ENCODE measurements at regions of chr11 and their contacts with region 1.

Region 1: DNA sequence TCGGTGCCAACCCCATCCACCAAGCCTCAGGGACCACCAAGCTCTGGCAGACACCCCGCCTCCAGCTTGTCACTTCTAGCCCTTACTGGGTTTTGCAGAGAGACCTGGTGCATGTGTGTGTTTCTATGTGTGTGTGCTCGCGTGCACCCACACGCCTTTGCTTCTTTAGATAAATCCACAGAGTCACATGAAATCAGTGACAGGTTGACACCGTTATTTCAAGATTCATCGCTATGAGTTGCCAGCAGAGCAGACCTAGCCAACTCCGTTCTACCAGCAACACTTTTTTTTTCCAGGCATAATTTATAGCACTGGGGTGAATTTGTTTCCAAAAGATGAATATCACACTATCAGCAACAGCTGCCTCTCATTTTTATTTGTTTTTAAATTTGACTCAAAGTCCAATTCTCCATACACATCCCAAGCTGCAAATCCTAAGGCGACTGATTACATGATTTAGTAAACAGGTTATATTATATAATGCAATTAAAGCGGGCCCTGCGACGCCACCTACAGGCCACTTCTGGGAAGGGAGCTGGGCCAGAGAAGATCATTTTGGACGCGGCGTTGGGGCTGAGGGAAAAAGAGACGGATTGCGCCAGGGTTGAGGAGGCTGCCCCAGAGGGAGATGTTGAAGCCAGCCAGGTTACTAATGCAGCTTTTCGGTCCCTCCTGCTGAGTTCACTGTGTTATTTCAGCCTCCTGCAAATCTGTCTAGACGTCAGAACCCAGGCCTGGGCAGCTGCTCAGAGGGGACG is 150.5 kb downstream of the FEZ1 start:
- DNase-seq: peak; percentile 73 to 85 (median 82)
- ATAC-seq: peak; percentile 68 to 86 (median 83)
- H3K4me3 ChIP-seq: no peak overlapping the region
- H3K27ac ChIP-seq: peak overlapping the region in 9 of 12 donors; percentile 11 to 74 (median 57)
- H3K4me1 ChIP-seq: peaks cover 0 to 39% (median 13%) of the 10 kb centered on the region in 12 donors
- H3K27me3 ChIP-seq: no peaks in the 10 kb centered on the region
- CTCF ChIP-seq: peak; percentile 78 to 94 (median 86)
- POLR2A ChIP-seq: no peak

Region 2: GRCh38 chr11:123741159-123742028 is 1604.2 kb before region 1 on chr11 and contains the start of gene ZNF202:
- intact Hi-C with region 1: no loop called
- DNase-seq: peak; percentile 93 to 96 (median 94)
- ATAC-seq: peak; percentile 96 to 99 (median 98)
- H3K4me3 ChIP-seq: peak within 1 kb of the TSS; percentile 64 to 98 (median 85)
- H3K27ac ChIP-seq: peak within 1 kb of the TSS; percentile 68 to 91 (median 80)
- H3K4me1 ChIP-seq: peaks cover 0 to 27% (median 16%) of the 10 kb centered on the region in 12 donors
- H3K27me3 ChIP-seq: no peaks in the 10 kb centered on the region
- CTCF ChIP-seq: peak in 6 of 12 donors; percentile 7 to 36 (median 14)
- POLR2A ChIP-seq: peak in 1 of 2 donors; percentile 65
- total RNA-seq, gene ZNF202: 1.7 to 5.7 (median 4.4) TPM

Region 3: GRCh38 chr11:124961972-124962609 is 383.5 kb before region 1 on chr11:
- intact Hi-C with region 1: loop called in 7 of 10 experiments (anchors 5 to 10 kb)
- DNase-seq: no peak
- ATAC-seq: peak in 3 of 4 donors; percentile 81 to 85 (median 83)
- H3K4me3 ChIP-seq: no peak overlapping the region
- H3K27ac ChIP-seq: no peak overlapping the region
- H3K4me1 ChIP-seq: peaks cover 0 to 3% (median 0%) of the 10 kb centered on the region in 12 donors
- H3K27me3 ChIP-seq: no peaks in the 10 kb centered on the region
- CTCF ChIP-seq: peak; percentile 55 to 78 (median 70)
- POLR2A ChIP-seq: no peak

Region 4: GRCh38 chr11:125091247-125091876 is 254.2 kb before region 1 on chr11:
- intact Hi-C with region 1: loop called in 9 of 10 experiments (anchors 2 to 5 kb)
- DNase-seq: peak in 2 of 5 donors; percentile 46 to 54
- ATAC-seq: peak; percentile 74 to 92 (median 86)
- H3K4me3 ChIP-seq: no peak overlapping the region
- H3K27ac ChIP-seq: no peak overlapping the region
- H3K4me1 ChIP-seq: peaks cover 0 to 10% (median 4%) of the 10 kb centered on the region in 12 donors
- H3K27me3 ChIP-seq: no peaks in the 10 kb centered on the region
- CTCF ChIP-seq: peak; percentile 47 to 82 (median 68)
- POLR2A ChIP-seq: no peak

Region 5: DNA sequence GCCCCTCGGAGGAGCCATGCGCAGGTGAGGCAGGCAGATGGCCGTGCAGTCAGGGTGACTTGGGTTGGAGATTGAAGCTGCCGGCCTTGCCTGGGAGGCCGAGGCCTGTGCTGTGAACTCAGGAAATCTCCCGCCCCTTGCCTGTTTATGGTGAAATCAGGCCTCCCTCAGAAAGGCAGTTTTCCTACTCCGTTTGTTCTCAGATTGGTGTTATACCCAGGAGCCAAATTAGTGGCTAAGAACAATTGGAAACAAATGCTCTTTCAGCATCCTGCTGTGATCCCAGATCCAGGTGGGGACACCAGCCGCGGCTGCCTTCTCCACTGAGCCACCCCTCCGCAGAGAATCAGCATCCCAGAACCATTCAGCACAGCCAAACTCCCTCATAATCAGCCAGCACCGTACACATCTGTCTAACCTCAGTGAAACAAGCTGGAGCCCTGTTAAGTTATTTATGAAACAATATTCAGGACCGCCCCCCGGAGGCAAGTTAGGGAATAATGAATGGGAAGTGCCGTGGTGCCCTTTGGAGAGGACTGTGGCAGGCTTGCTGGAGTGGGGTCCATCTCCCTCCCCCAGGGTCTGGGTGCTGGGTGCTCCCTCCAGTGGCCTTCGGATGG is 121.1 kb before region 1 on chr11:
- intact Hi-C with region 1: loop called in 2 of 10 experiments (anchors 5 to 10 kb)
- DNase-seq: peak in 3 of 5 donors; percentile 38 to 69 (median 43)
- ATAC-seq: peak; percentile 53 to 68 (median 63)
- H3K4me3 ChIP-seq: no peak overlapping the region
- H3K27ac ChIP-seq: peak overlapping the region in 7 of 12 donors; percentile 20 to 60 (median 37)
- H3K4me1 ChIP-seq: peaks cover 0 to 18% (median 3%) of the 10 kb centered on the region in 12 donors
- H3K27me3 ChIP-seq: no peaks in the 10 kb centered on the region
- CTCF ChIP-seq: peak in 8 of 12 donors; percentile 21 to 54 (median 38)
- POLR2A ChIP-seq: no peak

Region 6: GRCh38 chr11:125390946-125391345 is 45.3 kb after region 1 on chr11:
- intact Hi-C with region 1: no loop called
- DNase-seq: no peak
- ATAC-seq: peak in 1 of 4 donors; percentile 47
- H3K4me3 ChIP-seq: no peak overlapping the region
- H3K27ac ChIP-seq: no peak overlapping the region
- H3K4me1 ChIP-seq: peaks cover 0 to 14% (median 1%) of the 10 kb centered on the region in 12 donors
- H3K27me3 ChIP-seq: peaks cover 0 to 3% (median 0%) of the 10 kb centered on the region in 9 donors
- CTCF ChIP-seq: no peak
- POLR2A ChIP-seq: no peak

Region 7: DNA sequence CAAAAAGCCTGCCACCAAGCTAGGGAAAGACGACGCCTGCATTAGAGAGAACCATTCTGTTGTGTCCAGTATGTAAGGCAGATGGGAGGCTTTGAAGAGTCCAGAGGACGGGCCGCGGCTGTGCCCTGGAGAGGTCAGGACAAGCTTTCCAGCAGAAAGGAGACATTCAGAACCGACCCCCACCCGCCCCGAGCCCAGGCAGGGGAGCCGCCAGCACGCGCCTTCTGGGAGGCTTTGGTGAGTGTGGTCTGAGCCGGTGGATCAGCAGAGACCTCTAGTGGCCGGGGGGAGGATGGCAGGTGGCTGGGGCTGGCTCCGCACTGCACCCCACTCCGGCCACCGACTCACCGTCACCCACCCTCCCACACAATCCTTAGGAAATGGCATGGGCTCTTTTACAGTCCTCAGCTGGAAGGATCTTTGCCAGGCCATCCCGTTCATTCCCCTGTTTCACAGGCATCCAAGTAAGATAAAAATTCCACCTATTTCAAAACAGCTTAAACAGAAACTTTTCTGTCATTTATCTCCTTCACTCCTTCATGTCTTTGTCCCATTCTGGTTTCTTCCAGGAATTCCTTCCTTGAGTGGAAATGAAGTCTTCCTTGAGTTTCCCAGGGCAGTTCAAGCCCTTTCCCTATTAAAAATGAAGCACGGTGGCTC is 59.3 kb after region 1 on chr11:
- intact Hi-C with region 1: loop called in 5 of 10 experiments (anchors 2 to 10 kb)
- DNase-seq: peak; percentile 61 to 84 (median 74)
- ATAC-seq: peak; percentile 83 to 90 (median 89)
- H3K4me3 ChIP-seq: no peak overlapping the region
- H3K27ac ChIP-seq: no peak overlapping the region
- H3K4me1 ChIP-seq: peaks cover 0 to 26% (median 8%) of the 10 kb centered on the region in 12 donors
- H3K27me3 ChIP-seq: no peaks in the 10 kb centered on the region
- CTCF ChIP-seq: peak; percentile 87 to 98 (median 96)
- POLR2A ChIP-seq: no peak

Region 8: DNA sequence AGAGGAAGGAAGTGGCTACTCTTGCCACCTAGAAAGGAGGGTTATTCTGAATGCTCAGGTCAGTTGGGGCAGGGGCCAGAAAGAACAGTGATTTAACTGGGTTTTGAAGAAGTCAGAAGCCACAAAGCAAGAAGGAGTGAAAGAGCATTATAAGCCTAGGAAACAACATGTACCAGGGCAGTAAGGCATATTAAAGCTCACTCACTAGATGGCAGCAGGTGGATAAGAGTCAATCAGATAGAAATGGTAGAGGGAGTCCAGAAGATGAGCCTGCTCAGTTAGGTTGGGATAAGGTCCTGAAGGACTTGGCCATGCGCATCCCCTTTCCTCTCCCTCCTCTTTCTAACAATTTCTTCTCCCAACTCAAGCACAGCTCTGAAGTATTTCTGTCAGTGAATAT is 378.5 kb after region 1 on chr11:
- intact Hi-C with region 1: no loop called
- DNase-seq: no peak
- ATAC-seq: no peak
- H3K4me3 ChIP-seq: no peak overlapping the region
- H3K27ac ChIP-seq: no peak overlapping the region
- H3K4me1 ChIP-seq: no peaks in the 10 kb centered on the region
- H3K27me3 ChIP-seq: peaks cover 0 to 4% (median 0%) of the 10 kb centered on the region in 9 donors
- CTCF ChIP-seq: peak in 1 of 12 donors; percentile 7
- POLR2A ChIP-seq: no peak